MCF 10A (cell line): ENCODE measurements at regions of chr13 and their contacts with region 1.

Region 1: GRCh38 chr13:51416107-51416506 is 36.7 kb downstream of the INTS6 start:
- DNase-seq: no peak
- H3K4me3 Mint-ChIP-seq: no peak overlapping the region
- H3K27ac Mint-ChIP-seq: peak overlapping the region; percentile 64
- H3K4me1 Mint-ChIP-seq: peaks cover 19% of the 10 kb centered on the region
- H3K27me3 Mint-ChIP-seq: no peaks in the 10 kb centered on the region
- CTCF ChIP-seq: no peak

Region 2: GRCh38 chr13:51405176-51405575 is 10.9 kb before region 1 on chr13:
- CTCF ChIA-PET with region 1: interaction called, 3 read pairs
- POLR2A ChIA-PET with region 1: interaction called, 14 read pairs
- intact Hi-C with region 1: no loop called
- DNase-seq: no peak
- H3K4me3 Mint-ChIP-seq: no peak overlapping the region
- H3K27ac Mint-ChIP-seq: no peak overlapping the region
- H3K4me1 Mint-ChIP-seq: peaks cover 21% of the 10 kb centered on the region
- H3K27me3 Mint-ChIP-seq: no peaks in the 10 kb centered on the region
- CTCF ChIP-seq: no peak